ENCODE measurements at regions of chr11 and their contacts with region 1.

Region 1: GRCh38 chr11:47565340-47566148 is at the start of gene PTPMT1:
- DNase-seq: peak; percentile 59 to 75 (median 63)
- H3K4me3 ChIP-seq: peak within 1 kb of the TSS; percentile 61 to 87
- H3K4me3 Mint-ChIP-seq: peak within 1 kb of the TSS; percentile 76 to 88 (median 85)
- H3K27ac ChIP-seq: peak within 1 kb of the TSS; percentile 73
- H3K27ac Mint-ChIP-seq: peak within 1 kb of the TSS; percentile 73 to 92 (median 88)
- H3K4me1 ChIP-seq: peaks cover 13% of the 10 kb centered on the region
- H3K4me1 Mint-ChIP-seq: peaks cover 9 to 25% (median 18%) of the 10 kb centered on the region in 4 donors
- H3K27me3 ChIP-seq: no peaks in the 10 kb centered on the region
- H3K27me3 Mint-ChIP-seq: no peaks in the 10 kb centered on the region
- total RNA-seq, gene PTPMT1: 21.5 to 21.9 TPM

Region 2: DNA sequence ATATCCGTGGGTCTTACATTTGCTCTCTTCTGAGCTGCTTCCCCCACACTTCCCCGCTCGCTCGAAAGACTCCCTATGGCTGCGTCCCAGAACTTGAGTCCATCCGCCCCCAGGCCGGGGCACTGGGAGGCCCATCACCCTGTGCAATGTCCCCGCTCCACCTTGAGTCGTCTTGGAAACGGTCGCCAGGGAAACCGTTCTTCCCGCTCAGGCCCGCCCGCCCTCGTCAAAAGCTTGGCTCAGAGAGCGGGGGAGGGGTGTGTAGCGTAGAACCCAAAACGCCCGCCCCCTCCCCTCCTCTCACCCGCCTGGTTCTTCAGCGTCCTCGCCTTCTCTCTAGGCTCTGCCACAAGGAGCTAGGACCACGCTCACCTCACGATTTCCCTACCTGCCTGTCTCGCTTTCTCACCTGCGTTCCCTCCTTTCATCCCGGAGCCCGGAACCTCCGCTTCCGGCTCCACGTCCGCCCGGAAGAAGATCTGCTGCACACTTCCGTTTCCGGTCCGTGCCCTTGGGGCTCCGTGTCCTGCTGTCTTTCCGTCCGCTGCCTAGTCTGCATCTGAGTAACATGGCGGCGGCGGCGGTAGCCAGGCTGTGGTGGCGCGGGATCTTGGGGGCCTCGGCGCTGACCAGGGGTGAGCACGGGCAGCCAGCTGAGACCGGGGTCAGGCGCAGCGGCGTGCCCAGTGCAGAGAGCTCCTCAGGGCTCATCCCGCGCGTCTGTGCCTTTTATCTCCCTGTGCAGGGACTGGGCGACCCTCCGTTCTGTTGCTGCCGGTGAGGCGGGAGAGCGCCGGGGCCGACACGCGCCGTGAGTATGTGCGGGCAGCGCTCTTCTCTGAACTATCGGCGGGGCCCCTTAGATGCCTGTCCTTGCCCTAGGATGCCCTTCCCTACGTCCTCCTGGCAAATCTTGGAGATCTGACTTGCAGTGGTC is 13.2 kb after region 1 on chr11 and contains the starts of genes KBTBD4 and NDUFS3:
- CTCF ChIA-PET with region 1: interaction called, 7 read pairs
- POLR2A ChIA-PET with region 1: interaction called, 52 read pairs
- intact Hi-C with region 1: loop called (anchors 2 kb)
- DNase-seq: peak; percentile 87 to 90 (median 88)
- H3K4me3 ChIP-seq: peak within 1 kb of the TSS; percentile 80 to 93
- H3K4me3 Mint-ChIP-seq: peak within 1 kb of the TSS; percentile 97 to 100 (median 100)
- H3K27ac ChIP-seq: peak within 1 kb of the TSS; percentile 83
- H3K27ac Mint-ChIP-seq: peak within 1 kb of the TSS; percentile 96 to 100 (median 100)
- H3K4me1 ChIP-seq: peaks cover 42% of the 10 kb centered on the region
- H3K4me1 Mint-ChIP-seq: peaks cover 19 to 48% (median 35%) of the 10 kb centered on the region in 4 donors
- H3K27me3 ChIP-seq: no peaks in the 10 kb centered on the region
- H3K27me3 Mint-ChIP-seq: peaks cover 0 to 1% of the 10 kb centered on the region in 2 donors
- total RNA-seq, gene KBTBD4: 21.2 to 22.5 TPM
- total RNA-seq, gene NDUFS3: 70.9 to 71.0 TPM

Region 3: DNA sequence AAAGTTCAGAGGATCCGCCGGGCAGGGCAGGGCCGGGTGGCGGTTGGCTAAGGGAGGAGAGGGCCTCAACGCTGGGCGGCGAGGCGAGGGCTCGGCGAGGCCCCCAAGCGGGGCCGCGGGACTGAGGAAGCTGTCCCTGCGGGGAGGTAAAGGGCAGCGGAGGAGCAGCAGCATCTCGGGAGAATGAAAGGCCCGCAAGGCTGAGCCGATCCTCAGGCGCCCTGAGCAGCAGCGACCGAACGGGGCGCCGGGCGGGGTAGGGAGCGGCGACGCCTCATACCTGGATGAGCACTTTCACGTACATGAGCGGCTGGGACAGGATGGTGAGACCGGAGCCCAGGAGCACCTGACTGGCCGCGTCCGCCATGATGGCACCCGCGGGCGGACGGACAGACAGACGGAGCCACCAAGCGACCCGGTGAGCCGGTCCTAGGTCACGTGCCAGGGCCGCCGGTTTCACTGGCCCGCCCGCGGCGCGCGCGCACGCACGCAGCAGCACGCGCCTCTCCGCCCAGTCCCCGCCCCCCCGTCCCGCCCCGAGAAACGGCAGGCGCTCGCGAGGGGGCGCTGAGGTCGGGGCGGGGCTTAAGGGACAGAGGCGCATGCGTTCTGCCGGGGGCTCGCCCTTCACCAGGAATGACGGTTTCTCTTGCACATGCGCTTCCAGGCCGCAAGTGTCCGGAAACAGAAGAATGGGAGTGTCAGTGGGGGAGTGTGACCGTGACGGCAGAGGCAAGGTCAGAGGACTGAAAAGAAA is 76.7 kb after region 1 on chr11 and contains the start of gene MTCH2:
- CTCF ChIA-PET with region 1: no interaction called
- POLR2A ChIA-PET with region 1: no interaction called
- intact Hi-C with region 1: loop called (anchors 5 kb)
- DNase-seq: peak; percentile 95 to 96 (median 96)
- H3K4me3 ChIP-seq: peak within 1 kb of the TSS; percentile 86 to 90
- H3K4me3 Mint-ChIP-seq: peak within 1 kb of the TSS; percentile 82 to 98 (median 96)
- H3K27ac ChIP-seq: peak within 1 kb of the TSS; percentile 93
- H3K27ac Mint-ChIP-seq: peak within 1 kb of the TSS; percentile 84 to 99 (median 98)
- H3K4me1 ChIP-seq: peaks cover 23% of the 10 kb centered on the region
- H3K4me1 Mint-ChIP-seq: peaks cover 11 to 31% (median 18%) of the 10 kb centered on the region in 4 donors
- H3K27me3 ChIP-seq: no peaks in the 10 kb centered on the region
- H3K27me3 Mint-ChIP-seq: no peaks in the 10 kb centered on the region
- total RNA-seq, gene MTCH2: 23.6 to 23.9 TPM

Region 4: GRCh38 chr11:47715082-47715669 is 149.6 kb after region 1 on chr11 and contains the start of gene AGBL2:
- CTCF ChIA-PET with region 1: no interaction called
- POLR2A ChIA-PET with region 1: no interaction called
- intact Hi-C with region 1: loop called (anchors 5 kb)
- DNase-seq: peak; percentile 79 to 87 (median 80)
- H3K4me3 ChIP-seq: peak within 1 kb of the TSS; percentile 76 to 96
- H3K4me3 Mint-ChIP-seq: peak within 1 kb of the TSS; percentile 94 to 99 (median 98)
- H3K27ac ChIP-seq: peak within 1 kb of the TSS; percentile 92
- H3K27ac Mint-ChIP-seq: peak within 1 kb of the TSS; percentile 97 to 99 (median 98)
- H3K4me1 ChIP-seq: peaks cover 14% of the 10 kb centered on the region
- H3K4me1 Mint-ChIP-seq: peaks cover 7 to 25% (median 16%) of the 10 kb centered on the region in 4 donors
- H3K27me3 ChIP-seq: no peaks in the 10 kb centered on the region
- H3K27me3 Mint-ChIP-seq: no peaks in the 10 kb centered on the region
- total RNA-seq, gene AGBL2: 7.8 to 8.1 TPM

Region 5: GRCh38 chr11:48081151-48082010 is 515.8 kb after region 1 on chr11:
- CTCF ChIA-PET with region 1: no interaction called
- POLR2A ChIA-PET with region 1: no interaction called
- intact Hi-C with region 1: no loop called
- DNase-seq: peak in 1 of 5 donors; percentile 43
- H3K4me3 ChIP-seq: no peak overlapping the region
- H3K4me3 Mint-ChIP-seq: no peak overlapping the region
- H3K27ac ChIP-seq: no peak overlapping the region
- H3K27ac Mint-ChIP-seq: peak overlapping the region in 2 of 7 donors; percentile 36 to 54
- H3K4me1 ChIP-seq: peaks cover 9% of the 10 kb centered on the region
- H3K4me1 Mint-ChIP-seq: peaks cover 19 to 47% (median 40%) of the 10 kb centered on the region in 4 donors
- H3K27me3 ChIP-seq: no peaks in the 10 kb centered on the region
- H3K27me3 Mint-ChIP-seq: no peaks in the 10 kb centered on the region